ENCODE measurements at regions of chr2 and their contacts with region 1.

Region 1: GRCh38 chr2:168490015-168490874 is 34.2 kb downstream of the CERS6 start:
- DNase-seq: peak; percentile 28
- H3K4me3 Mint-ChIP-seq: peak overlapping the region; percentile 74
- H3K27ac Mint-ChIP-seq: peak overlapping the region; percentile 90
- H3K4me1 Mint-ChIP-seq: peaks cover 50% of the 10 kb centered on the region
- H3K27me3 Mint-ChIP-seq: no peaks in the 10 kb centered on the region

Region 2: DNA sequence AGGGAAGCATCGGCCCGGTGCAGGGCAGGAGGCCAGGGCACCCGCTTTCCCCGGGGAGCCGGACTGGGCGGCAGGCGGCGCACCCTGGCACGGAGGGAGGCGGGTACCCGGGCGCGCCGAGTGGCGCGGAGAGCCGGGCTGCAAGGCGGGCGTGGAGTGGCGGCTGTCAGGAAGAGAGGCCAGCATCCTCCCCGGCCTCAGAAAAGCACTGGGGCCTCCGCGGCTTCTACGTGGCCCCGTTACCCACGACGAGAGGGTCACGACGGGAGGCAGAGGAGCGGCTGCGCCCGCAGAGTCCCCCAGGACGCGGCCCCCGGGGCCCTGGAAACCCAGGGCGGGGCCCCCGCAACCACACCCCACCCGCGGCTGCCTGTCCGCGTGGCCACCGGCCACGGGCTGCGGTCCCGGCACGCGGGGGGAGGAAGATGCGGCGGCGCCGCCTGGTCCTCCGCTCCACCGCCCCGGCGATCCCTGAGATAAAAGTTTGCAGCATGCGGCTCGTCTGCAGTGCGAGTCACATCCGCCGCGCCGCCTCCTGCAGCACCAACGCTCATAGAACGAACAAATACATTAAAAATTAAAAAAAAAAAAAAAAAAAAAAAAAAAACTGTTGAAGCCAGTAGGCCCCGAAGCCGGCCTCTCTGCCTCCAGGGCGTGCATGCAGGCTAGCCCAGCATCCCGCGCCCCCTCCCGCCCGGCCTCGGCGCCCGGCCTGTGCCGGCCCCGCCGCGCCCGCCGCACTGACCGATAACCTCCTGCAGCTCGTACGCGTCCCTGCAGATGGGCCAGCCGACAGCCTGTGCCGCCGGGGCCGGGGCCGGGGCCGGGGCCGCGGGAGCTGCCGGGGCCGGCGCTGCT is 243.5 kb before region 1 on chr2:
- intact Hi-C with region 1: loop called (anchors 2 kb)
- DNase-seq: peak; percentile 83
- H3K4me3 Mint-ChIP-seq: peak overlapping the region; percentile 93
- H3K27ac Mint-ChIP-seq: peak overlapping the region; percentile 94
- H3K4me1 Mint-ChIP-seq: peaks cover 42% of the 10 kb centered on the region
- H3K27me3 Mint-ChIP-seq: no peaks in the 10 kb centered on the region

Region 3: GRCh38 chr2:168432565-168433186 is 57.6 kb before region 1 on chr2:
- intact Hi-C with region 1: loop called (anchors 1 kb)
- DNase-seq: peak; percentile 46
- H3K4me3 Mint-ChIP-seq: peak overlapping the region; percentile 14
- H3K27ac Mint-ChIP-seq: peak overlapping the region; percentile 84
- H3K4me1 Mint-ChIP-seq: peaks cover 35% of the 10 kb centered on the region
- H3K27me3 Mint-ChIP-seq: no peaks in the 10 kb centered on the region

Region 4: GRCh38 chr2:168466819-168467565 is 23.3 kb before region 1 on chr2:
- intact Hi-C with region 1: loop called (anchors 1 kb)
- DNase-seq: no peak
- H3K4me3 Mint-ChIP-seq: peak overlapping the region; percentile 53
- H3K27ac Mint-ChIP-seq: peak overlapping the region; percentile 77
- H3K4me1 Mint-ChIP-seq: peaks cover 58% of the 10 kb centered on the region
- H3K27me3 Mint-ChIP-seq: no peaks in the 10 kb centered on the region

Region 5: DNA sequence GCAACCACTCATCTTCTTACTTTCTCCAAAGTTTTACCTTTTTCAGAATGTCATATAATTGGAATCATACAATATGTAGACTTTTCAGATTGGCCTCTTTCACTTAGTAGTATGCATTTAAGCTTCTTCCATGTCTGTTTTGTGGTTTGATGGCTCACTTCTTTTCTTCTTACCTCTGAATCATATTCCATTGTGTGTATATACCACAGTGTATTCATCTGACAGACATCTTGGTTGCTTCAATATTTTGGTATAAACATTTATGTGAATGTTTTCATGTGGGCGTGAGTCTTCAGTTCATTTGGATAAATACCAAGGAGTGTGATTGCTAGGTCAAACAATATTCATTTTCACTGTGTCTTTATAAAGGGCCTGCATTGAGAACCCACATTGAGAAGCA is 176.1 kb after region 1 on chr2:
- intact Hi-C with region 1: loop called (anchors 2 kb)
- DNase-seq: no peak
- H3K4me3 Mint-ChIP-seq: no peak overlapping the region
- H3K27ac Mint-ChIP-seq: peak overlapping the region; percentile 47
- H3K4me1 Mint-ChIP-seq: peaks cover 32% of the 10 kb centered on the region
- H3K27me3 Mint-ChIP-seq: no peaks in the 10 kb centered on the region

Region 6: GRCh38 chr2:168912901-168913369 is 422.7 kb after region 1 on chr2:
- intact Hi-C with region 1: loop called (anchors 10 kb)
- DNase-seq: no peak
- H3K4me3 Mint-ChIP-seq: peak overlapping the region; percentile 45
- H3K27ac Mint-ChIP-seq: no peak overlapping the region
- H3K4me1 Mint-ChIP-seq: peaks cover 16% of the 10 kb centered on the region
- H3K27me3 Mint-ChIP-seq: peaks cover 50% of the 10 kb centered on the region

Measured in activated T-helper 2 cell treated with anti-CD3 and anti-CD28 coated beads, Interferon-gamma antibody, Interleukin-2, Interleukin-4, amounts not matched to agents 10 μg/mL and 5 μg/mL and 100 μg/mL, durations not matched to agents 14 hours and 24 hours and 36 hours (primary cell).